GM12878 (cell line): ENCODE measurements at regions of chr7 and their contacts with region 1.

Region 1: GRCh38 chr7:90194911-90195809 is 16.4 kb upstream of the STEAP2 start:
- DNase-seq: no peak
- ATAC-seq: no peak
- H3K4me3 ChIP-seq: no peak overlapping the region
- H3K27ac ChIP-seq: no peak overlapping the region
- H3K4me1 ChIP-seq: no peaks in the 10 kb centered on the region
- H3K27me3 ChIP-seq: no peaks in the 10 kb centered on the region
- CTCF ChIP-seq: no peak
- EP300 ChIP-seq: no peak
- POLR2A ChIP-seq: no peak
- RAD21 ChIP-seq: no peak

Region 2: DNA sequence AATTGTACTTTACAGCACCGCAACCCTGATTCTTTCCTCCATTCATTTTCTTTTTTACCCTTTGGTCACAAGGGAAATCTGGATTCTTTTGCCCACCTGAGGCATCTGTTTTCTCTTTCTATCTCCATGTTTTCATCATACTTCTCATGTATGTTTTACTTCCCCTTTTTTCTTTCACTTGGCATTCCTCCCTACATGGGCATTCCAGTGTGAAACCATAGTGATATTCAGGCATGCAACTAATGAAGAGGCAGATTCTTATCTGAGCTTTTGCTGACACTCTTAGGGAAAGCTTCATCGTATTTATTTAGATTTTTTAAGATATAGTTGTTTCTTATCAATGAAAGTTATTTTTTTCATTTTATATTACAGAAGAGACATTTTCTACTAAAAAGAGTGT is 994.4 kb before region 1 on chr7:
- CTCF ChIA-PET with region 1: no interaction called
- POLR2A ChIA-PET with region 1: no interaction called
- RAD21 ChIA-PET with region 1: no interaction called
- SMC1A ChIA-PET with region 1: no interaction called
- in situ Hi-C with region 1: no loop called
- intact Hi-C with region 1: no loop called
- DNase-seq: no peak
- ATAC-seq: no peak
- H3K4me3 ChIP-seq: no peak overlapping the region
- H3K27ac ChIP-seq: no peak overlapping the region
- H3K4me1 ChIP-seq: no peaks in the 10 kb centered on the region
- H3K27me3 ChIP-seq: no peaks in the 10 kb centered on the region
- CTCF ChIP-seq: no peak
- EP300 ChIP-seq: no peak
- POLR2A ChIP-seq: no peak
- RAD21 ChIP-seq: no peak

Region 3: DNA sequence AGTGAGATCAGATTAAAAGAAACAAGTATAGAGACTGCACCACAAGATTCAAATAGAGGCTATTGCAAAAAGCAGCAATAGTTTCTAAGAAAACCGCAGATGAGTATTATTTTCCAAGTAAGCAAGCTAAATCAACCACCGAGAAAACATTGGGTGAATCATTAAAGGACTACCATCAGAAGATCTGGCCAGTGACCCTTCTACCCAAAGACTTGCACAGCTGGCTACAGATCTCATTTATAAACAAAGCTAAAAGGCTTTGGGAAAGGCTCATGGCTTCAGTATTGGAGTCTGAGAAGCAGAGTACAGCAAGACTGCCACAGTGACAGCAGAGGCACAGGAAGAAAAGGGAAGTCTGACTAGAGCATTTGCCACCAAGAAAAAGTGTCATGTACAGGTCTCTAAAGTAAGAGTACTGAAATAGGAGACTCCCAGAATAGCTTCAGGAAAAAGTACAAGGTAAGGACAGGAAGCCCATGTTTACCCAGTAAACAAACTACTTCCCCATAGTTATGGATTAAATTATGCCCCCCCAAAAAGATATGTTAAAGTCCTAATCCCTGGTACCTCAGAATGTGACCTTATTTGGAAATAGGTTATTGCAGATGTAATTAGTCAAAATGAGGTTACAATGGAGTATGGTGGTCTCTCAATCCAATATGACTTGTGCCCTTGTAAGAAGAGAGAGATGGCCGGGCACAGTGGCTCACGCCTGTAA is 21.9 kb before region 1 on chr7:
- CTCF ChIA-PET with region 1: no interaction called
- POLR2A ChIA-PET with region 1: interaction called, 11 read pairs
- RAD21 ChIA-PET with region 1: interaction called, 18 read pairs
- SMC1A ChIA-PET with region 1: interaction called, 15 read pairs
- in situ Hi-C with region 1: no loop called
- intact Hi-C with region 1: no loop called
- DNase-seq: peak; percentile 64
- ATAC-seq: peak; percentile 93
- H3K4me3 ChIP-seq: no peak overlapping the region
- H3K27ac ChIP-seq: no peak overlapping the region
- H3K4me1 ChIP-seq: no peaks in the 10 kb centered on the region
- H3K27me3 ChIP-seq: no peaks in the 10 kb centered on the region
- CTCF ChIP-seq: no peak
- EP300 ChIP-seq: peak in 1 of 2 experiments; percentile 48; a peak in 1 of 4 replicates
- POLR2A ChIP-seq: no peak
- RAD21 ChIP-seq: no peak

Region 4: DNA sequence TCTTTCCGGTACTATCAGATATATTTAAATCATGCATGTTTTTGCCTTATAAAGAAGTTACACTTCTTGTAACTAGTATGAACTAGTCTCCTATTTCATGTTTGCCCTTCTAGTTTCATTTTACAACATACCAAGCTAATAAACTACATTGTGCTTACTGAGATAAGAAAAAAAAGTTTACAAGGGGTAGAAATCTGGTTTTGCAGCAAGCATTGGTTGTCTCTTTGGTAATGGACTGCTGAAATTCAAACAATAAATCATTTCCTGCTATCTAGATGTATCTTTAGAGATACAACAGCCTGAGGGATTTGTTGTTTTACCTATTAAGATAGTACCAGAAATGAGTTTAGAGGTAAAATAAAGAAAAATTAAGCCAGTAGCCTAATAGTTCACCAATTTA is 293.1 kb after region 1 on chr7:
- CTCF ChIA-PET with region 1: no interaction called
- POLR2A ChIA-PET with region 1: no interaction called
- RAD21 ChIA-PET with region 1: no interaction called
- SMC1A ChIA-PET with region 1: no interaction called
- in situ Hi-C with region 1: no loop called
- intact Hi-C with region 1: no loop called
- DNase-seq: no peak
- ATAC-seq: no peak
- H3K4me3 ChIP-seq: no peak overlapping the region
- H3K27ac ChIP-seq: no peak overlapping the region
- H3K4me1 ChIP-seq: no peaks in the 10 kb centered on the region
- H3K27me3 ChIP-seq: no peaks in the 10 kb centered on the region
- CTCF ChIP-seq: no peak
- EP300 ChIP-seq: no peak
- POLR2A ChIP-seq: no peak
- RAD21 ChIP-seq: no peak